GM12878 (cell line): ENCODE measurements at regions of chr16 and their contacts with region 1.

Region 1: GRCh38 chr16:66977341-66978113 is 10.9 kb upstream of the CES4A start:
- DNase-seq: peak; percentile 21
- ATAC-seq: peak; percentile 99
- H3K4me3 ChIP-seq: no peak overlapping the region
- H3K27ac ChIP-seq: no peak overlapping the region
- H3K4me1 ChIP-seq: peaks cover 3% of the 10 kb centered on the region; the same call in 1 of the 2 replicates
- H3K27me3 ChIP-seq: no peaks in the 10 kb centered on the region
- CTCF ChIP-seq: peak; percentile 92 to 99 (median 95); a peak in 5 of 6 replicates
- EP300 ChIP-seq: no peak
- POLR2A ChIP-seq: no peak
- RAD21 ChIP-seq: peak; percentile 92

Region 2: DNA sequence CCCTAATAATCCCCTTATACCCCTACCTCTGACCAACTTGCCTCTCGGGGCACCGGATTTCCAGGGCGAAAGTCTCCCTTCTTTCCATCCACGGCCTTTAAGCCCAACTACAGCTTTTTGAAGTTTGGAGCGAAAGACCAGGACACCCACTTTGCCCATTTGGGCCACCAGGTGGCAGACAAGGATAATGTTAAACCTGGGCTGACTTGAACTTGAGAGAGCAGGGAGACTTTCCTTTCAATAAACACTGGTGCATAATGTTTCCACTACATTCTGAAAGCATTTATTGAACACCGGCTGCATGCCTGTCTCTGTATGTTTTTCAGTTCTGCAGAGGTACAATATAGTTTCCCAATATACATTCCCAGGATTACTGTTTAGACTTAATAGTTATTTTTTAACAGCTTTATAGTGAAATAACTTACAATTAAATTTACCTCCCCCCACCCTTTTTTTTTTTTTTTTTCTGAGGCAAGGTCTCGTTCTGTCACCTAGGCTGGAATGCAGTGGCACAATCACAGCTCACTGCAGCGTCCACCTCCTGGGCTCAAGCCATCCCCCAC is 23.3 kb before region 1 on chr16:
- CTCF ChIA-PET with region 1: interaction called, 10 read pairs
- POLR2A ChIA-PET with region 1: no interaction called
- RAD21 ChIA-PET with region 1: interaction called, 4 read pairs
- SMC1A ChIA-PET with region 1: interaction called, 6 read pairs
- in situ Hi-C with region 1: no loop called
- intact Hi-C with region 1: loop called (anchors 1 kb)
- DNase-seq: peak; percentile 45
- ATAC-seq: peak; percentile 82
- H3K4me3 ChIP-seq: no peak overlapping the region
- H3K27ac ChIP-seq: no peak overlapping the region
- H3K4me1 ChIP-seq: peaks cover 9% of the 10 kb centered on the region
- H3K27me3 ChIP-seq: no peaks in the 10 kb centered on the region
- CTCF ChIP-seq: peak; percentile 76 to 92 (median 90)
- EP300 ChIP-seq: no peak
- POLR2A ChIP-seq: no peak
- RAD21 ChIP-seq: peak; percentile 90

Region 3: DNA sequence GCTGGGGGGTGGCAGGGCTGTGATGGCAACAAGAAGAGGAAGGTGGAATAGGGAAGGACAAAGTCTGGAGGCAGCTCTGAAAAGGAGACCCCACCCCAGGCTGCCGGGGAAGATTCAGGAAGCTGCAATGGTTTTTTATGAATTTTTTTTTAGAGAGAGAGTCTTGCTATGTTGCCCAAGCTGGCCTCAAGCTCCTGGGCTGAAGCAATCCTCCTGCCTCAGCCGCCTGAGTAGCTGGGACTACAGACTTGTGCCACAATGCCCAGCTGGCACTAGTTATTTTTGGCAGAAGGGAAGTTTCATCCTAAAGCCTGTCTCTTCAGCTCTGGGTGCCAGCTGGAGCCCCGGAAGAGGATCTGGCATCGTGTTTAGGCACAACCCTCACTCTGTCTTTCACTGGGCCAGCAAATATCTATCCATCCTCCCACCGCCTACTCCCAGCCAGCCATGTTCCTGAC is 17.8 kb before region 1 on chr16:
- CTCF ChIA-PET with region 1: interaction called, 10 read pairs
- POLR2A ChIA-PET with region 1: no interaction called
- RAD21 ChIA-PET with region 1: interaction called, 5 read pairs
- SMC1A ChIA-PET with region 1: no interaction called
- in situ Hi-C with region 1: no loop called
- intact Hi-C with region 1: loop called (anchors 1 kb)
- DNase-seq: no peak
- ATAC-seq: no peak
- H3K4me3 ChIP-seq: no peak overlapping the region
- H3K27ac ChIP-seq: no peak overlapping the region
- H3K4me1 ChIP-seq: peaks cover 11% of the 10 kb centered on the region
- H3K27me3 ChIP-seq: no peaks in the 10 kb centered on the region
- CTCF ChIP-seq: no peak
- EP300 ChIP-seq: no peak
- POLR2A ChIP-seq: no peak
- RAD21 ChIP-seq: no peak

Region 4: DNA sequence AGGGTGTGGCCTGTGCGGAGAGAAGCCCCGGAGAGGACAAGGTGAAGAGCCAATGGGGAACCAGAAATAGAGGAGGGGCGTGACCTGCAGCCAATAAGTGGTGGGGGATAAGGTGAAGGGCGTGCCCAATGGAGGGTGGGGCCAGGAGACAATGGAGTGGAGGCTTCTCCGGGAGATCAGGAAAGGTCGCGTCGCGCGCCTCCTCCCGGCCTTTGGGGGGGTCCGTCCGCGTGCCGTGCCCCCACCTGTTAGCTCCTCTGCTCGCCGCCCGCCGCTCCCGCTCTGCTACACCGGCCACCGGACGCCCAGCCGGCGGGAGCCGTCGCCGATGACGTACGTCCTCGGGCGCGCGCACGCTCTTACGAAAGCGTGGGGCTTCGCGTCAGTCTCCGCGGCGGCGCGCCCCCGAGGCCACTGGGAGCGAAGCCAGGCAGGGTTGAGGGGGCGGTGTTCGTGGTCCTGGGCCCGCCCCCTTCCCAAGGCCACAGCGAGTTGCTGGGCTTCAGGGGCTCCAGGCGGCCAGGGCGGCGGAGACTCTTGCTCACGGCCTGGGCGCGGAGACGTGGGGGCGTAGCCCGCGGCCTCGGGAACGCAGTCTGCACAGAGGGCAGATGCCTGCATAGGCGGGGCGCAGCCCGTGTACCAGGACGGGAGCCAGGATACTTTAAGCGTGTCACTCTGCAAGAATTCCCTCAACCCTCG is 206.3 kb after region 1 on chr16 and contains the start of gene MATCAP1:
- CTCF ChIA-PET with region 1: interaction called, 9 read pairs
- POLR2A ChIA-PET with region 1: no interaction called
- RAD21 ChIA-PET with region 1: interaction called, 3 read pairs
- SMC1A ChIA-PET with region 1: interaction called, 7 read pairs
- in situ Hi-C with region 1: no loop called
- intact Hi-C with region 1: loop called (anchors 1 kb)
- DNase-seq: peak; percentile 91
- ATAC-seq: peak; percentile 96
- H3K4me3 ChIP-seq: peak within 1 kb of the TSS; percentile 76
- H3K27ac ChIP-seq: peak within 1 kb of the TSS; percentile 84
- H3K4me1 ChIP-seq: peaks cover 4% of the 10 kb centered on the region
- H3K27me3 ChIP-seq: peaks cover 0 to 3% of the 10 kb centered on the region in 2 experiments; a peak in 2 of 4 replicates
- CTCF ChIP-seq: no peak
- EP300 ChIP-seq: no peak
- POLR2A ChIP-seq: peak; percentile 76
- RAD21 ChIP-seq: no peak
- polyA plus RNA-seq, gene MATCAP1: 2.8 to 6.6 TPM

Region 5: DNA sequence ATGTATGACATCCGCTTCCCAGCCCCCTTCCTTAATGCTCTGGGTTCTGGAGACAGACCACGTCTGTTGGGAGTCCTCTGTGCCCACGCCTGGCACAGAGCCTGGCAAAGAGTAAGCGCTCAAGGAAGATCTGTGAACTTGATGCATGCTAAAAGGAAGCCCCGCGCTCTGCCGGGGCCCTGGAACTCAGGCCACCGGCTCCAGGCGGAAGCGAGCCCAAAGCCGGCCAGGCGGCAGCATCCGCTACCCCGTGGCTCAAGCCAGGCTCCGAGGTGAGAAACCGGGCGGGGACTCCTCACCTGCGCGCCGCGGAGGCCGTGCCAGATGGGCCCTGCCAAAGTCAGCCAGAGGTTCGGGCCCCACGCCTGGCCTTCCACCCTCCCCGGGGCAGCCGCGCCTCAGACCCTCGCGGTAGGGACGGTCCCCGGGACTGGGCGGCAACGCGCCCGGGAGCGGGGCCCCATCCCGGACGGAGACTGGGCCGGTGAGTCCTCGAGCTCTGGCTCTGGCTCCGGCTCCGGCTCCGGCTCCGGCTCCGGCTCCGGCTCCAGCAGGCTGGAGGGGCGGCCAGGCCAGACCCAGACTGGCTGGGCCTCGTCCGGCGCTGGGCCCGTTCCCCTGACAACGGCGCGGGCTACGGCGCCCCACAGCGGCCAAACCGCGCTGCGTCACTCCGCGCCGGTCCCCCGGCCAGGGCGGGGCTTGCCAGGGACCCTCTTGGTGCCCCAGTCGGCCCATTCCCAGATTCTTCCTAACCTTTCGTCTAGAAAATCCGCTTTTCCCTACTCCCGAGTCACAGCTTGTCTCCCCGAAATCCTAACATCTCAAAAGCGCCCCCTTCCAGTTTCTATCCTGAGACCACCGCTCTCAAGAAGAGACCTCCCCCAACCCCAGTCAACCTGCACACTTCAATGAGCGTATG is 438.6 kb after region 1 on chr16 and contains the start of gene ZDHHC1:
- CTCF ChIA-PET with region 1: no interaction called
- POLR2A ChIA-PET with region 1: no interaction called
- RAD21 ChIA-PET with region 1: no interaction called
- SMC1A ChIA-PET with region 1: no interaction called
- in situ Hi-C with region 1: loop called (anchors 25 kb)
- intact Hi-C with region 1: no loop called
- DNase-seq: no peak
- ATAC-seq: peak; percentile 92
- H3K4me3 ChIP-seq: peak within 1 kb of the TSS; percentile 68; the same call in 1 of the 2 replicates
- H3K27ac ChIP-seq: no peak within 1 kb of the TSS
- H3K4me1 ChIP-seq: peaks cover 7% of the 10 kb centered on the region; the same call in 1 of the 2 replicates
- H3K27me3 ChIP-seq: peaks cover 2 to 4% of the 10 kb centered on the region in 2 experiments; a peak in 3 of 4 replicates
- CTCF ChIP-seq: peak; percentile 44 to 60 (median 48); a peak in 5 of 6 replicates
- EP300 ChIP-seq: no peak
- POLR2A ChIP-seq: no peak
- RAD21 ChIP-seq: peak; percentile 41
- polyA plus RNA-seq, gene ZDHHC1: not detected